ENCODE measurements at regions of chr2 and their contacts with region 1.

Region 1: DNA sequence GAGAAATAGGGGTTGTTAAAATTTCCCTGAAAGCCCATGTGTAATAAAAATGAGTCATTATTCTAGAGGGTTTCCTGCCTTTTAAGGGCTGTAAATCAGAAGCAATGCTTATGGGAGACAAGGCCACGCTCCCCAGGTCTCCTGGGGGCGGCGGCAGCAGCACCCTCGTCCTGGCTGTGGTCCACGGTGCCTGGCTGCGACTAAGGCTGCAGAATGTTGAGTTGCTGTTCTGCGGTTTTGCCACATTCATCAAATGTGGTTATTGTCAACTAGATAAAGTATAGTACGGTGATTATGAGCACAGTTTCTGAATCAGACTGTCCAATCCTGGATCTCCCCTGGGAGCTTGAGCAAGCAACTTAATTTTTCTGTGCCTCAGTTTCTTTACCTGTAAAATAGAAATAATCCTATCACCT is 11.9 kb upstream of the AGFG1 start:
- DNase-seq: peak; percentile 85
- H3K4me3 Mint-ChIP-seq: peak overlapping the region; percentile 65
- H3K27ac Mint-ChIP-seq: peak overlapping the region; percentile 99
- H3K4me1 Mint-ChIP-seq: peaks cover 85% of the 10 kb centered on the region
- H3K27me3 Mint-ChIP-seq: no peaks in the 10 kb centered on the region

Region 2: GRCh38 chr2:227324995-227325838 is 134.9 kb before region 1 on chr2 and contains the start of gene MFF:
- CTCF ChIA-PET with region 1: interaction called, 3 read pairs
- intact Hi-C with region 1: loop called (anchors 1 kb)
- DNase-seq: peak; percentile 98
- H3K4me3 Mint-ChIP-seq: peak within 1 kb of the TSS; percentile 90
- H3K27ac Mint-ChIP-seq: peak within 1 kb of the TSS; percentile 88
- H3K4me1 Mint-ChIP-seq: peaks cover 24% of the 10 kb centered on the region
- H3K27me3 Mint-ChIP-seq: peaks cover 6% of the 10 kb centered on the region
- total RNA-seq, gene MFF: 82.1 to 82.2 TPM

Region 3: DNA sequence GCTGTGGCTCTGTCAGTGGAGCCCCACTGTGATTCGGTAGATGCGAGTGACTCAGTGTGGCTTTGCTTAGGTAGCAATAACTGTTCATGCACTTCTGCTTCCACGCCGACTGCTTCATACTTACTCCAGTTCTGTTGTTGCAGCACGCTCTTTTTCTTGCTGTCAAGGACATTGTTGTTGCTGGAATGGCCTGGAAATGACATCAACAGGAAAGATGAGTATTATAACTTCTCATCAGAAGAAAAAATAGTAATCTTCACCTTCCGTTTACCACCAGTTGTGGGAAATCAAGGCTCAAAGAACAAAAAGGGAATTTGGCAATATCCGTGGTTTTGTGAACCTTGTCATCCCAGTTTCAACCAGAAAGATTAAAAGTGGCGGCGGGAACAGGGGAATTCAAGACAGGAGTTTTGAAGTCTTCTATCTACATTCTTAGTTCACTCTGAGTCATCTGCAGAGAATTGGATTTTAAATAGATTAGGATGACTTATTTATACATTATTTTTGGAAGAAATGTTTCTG is 89.2 kb before region 1 on chr2:
- CTCF ChIA-PET with region 1: interaction called, 4 read pairs
- intact Hi-C with region 1: loop called (anchors 1 kb)
- DNase-seq: peak; percentile 44
- H3K4me3 Mint-ChIP-seq: no peak overlapping the region
- H3K27ac Mint-ChIP-seq: peak overlapping the region; percentile 22
- H3K4me1 Mint-ChIP-seq: peaks cover 25% of the 10 kb centered on the region
- H3K27me3 Mint-ChIP-seq: no peaks in the 10 kb centered on the region

Region 4: DNA sequence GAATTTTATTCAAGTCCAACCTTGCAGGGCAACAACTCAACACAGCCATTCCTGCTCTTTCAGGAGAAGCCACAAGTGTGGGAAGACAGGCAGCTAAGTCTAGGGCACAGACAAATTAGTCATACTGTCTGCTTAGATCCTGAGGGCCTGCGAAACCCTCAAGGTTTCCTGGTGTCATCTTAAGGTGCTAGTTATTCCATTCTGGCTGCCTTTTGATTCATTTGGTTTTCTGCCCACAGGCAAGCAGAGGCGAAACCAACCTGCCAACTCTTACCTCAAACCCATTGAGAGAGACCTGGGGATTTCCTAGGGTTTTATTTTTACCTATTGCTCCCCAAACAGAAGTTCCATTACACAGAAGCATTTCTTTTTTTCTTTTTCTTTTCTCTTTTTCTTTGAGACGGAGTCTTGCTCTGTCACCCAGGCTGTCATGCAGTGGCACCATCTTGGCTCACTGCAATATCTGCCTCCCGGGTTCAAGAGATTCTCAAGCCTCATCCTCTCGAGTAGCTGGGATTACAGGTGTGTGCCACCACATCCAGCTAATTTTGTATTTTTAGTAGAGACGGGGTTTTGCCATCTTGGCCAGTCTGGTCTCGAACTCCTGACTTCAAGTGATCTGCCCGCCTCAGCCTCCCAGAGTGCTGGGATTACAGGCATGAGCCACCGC is 48.6 kb before region 1 on chr2:
- CTCF ChIA-PET with region 1: interaction called, 95 read pairs
- intact Hi-C with region 1: loop called (anchors 1 kb)
- DNase-seq: peak; percentile 83
- H3K4me3 Mint-ChIP-seq: peak overlapping the region; percentile 51
- H3K27ac Mint-ChIP-seq: peak overlapping the region; percentile 96
- H3K4me1 Mint-ChIP-seq: peaks cover 76% of the 10 kb centered on the region
- H3K27me3 Mint-ChIP-seq: no peaks in the 10 kb centered on the region

Region 5: GRCh38 chr2:227479865-227480475 is 19.9 kb after region 1 on chr2:
- CTCF ChIA-PET with region 1: interaction called, 16 read pairs
- intact Hi-C with region 1: loop called (anchors 1 kb)
- DNase-seq: no peak
- H3K4me3 Mint-ChIP-seq: peak overlapping the region; percentile 17
- H3K27ac Mint-ChIP-seq: peak overlapping the region; percentile 82
- H3K4me1 Mint-ChIP-seq: peaks cover 81% of the 10 kb centered on the region
- H3K27me3 Mint-ChIP-seq: no peaks in the 10 kb centered on the region

Region 6: DNA sequence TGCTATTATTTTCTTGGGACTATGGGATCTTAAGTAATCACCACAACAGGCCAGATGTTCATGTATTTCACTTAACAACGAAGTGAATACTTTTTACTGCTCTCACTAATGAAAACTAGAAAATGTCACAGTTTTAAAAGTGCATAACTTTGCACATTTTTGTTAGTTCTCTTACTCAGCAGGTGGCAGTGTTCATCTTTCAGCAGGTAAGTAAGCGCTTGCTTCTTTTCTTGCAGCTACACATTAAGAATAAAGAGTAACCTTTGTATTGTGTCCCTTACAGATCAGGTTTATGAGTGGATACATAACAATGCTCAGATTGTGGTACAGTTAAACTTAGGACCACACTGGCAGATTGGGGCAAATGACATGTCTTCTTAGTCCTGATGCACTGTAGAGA is 472.3 kb after region 1 on chr2:
- CTCF ChIA-PET with region 1: no interaction called
- intact Hi-C with region 1: no loop called
- DNase-seq: no peak
- H3K4me3 Mint-ChIP-seq: no peak overlapping the region
- H3K27ac Mint-ChIP-seq: no peak overlapping the region
- H3K4me1 Mint-ChIP-seq: no peaks in the 10 kb centered on the region
- H3K27me3 Mint-ChIP-seq: no peaks in the 10 kb centered on the region

Measured in activated naive CD4-positive, alpha-beta T cell treated with anti-CD3 and anti-CD28 coated beads for 36 hours (primary cell).